Activated T-helper 1 cell treated with anti-CD3 and anti-CD28 coated beads, Interleukin-12 subunit alpha, Interleukin-12 subunit beta, Interleukin-2, Interleukin-4 antibody, amounts not matched to agents 30 ng/mL and 10 ng/mL and 1 ng/mL, durations not matched to agents 14 hours and 24 hours and 36 hours (primary cell): ENCODE measurements at regions of chr16 and their contacts with region 1.

Region 1: DNA sequence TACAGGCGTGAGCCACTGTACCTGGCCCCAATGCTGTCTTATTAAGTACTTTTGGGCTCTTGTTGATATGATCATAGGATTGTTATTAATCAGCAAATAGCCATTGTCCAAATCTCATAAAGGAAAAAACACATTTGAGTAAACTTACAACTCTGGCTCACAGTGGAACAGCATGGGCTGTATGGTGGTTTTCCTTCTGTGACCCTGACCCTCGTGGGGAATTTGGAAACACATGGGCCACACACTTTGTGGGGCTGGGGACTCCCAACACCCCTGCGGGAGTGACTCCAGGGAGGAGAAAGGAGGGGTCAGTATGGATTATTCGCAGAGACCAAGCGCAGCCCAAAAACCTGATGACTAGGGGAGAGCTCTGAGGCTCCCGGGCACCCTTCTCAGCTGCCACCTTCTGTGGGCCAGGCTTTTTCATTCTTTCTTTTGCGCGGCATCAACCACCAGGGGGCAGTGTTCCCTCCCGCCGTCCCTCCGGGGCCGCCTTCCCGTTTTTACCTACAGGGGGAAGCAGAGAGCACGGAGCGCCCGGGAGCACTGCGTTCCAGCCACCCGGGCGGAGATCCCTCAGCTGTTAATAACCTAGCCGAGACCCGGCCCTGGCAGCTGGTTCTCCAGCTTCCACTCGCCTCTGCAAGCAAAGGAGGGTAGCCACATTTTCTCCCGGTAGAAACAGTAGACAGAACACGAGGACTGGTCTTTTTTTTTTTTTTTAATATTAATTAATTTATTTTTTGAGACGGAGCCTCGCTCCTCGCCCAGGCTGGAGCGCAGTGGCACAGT is 9.7 kb downstream of the TSNAXIP1 start:
- DNase-seq: peak; percentile 88
- H3K4me3 Mint-ChIP-seq: no peak overlapping the region
- H3K27ac Mint-ChIP-seq: no peak overlapping the region
- H3K4me1 Mint-ChIP-seq: peaks cover 8% of the 10 kb centered on the region
- H3K27me3 Mint-ChIP-seq: peaks cover 10% of the 10 kb centered on the region

Region 2: GRCh38 chr16:67865316-67865715 is 48.9 kb after region 1 on chr16:
- intact Hi-C with region 1: loop called (anchors 2 kb)
- DNase-seq: no peak
- H3K4me3 Mint-ChIP-seq: no peak overlapping the region
- H3K27ac Mint-ChIP-seq: peak overlapping the region; percentile 73
- H3K4me1 Mint-ChIP-seq: peaks cover 15% of the 10 kb centered on the region
- H3K27me3 Mint-ChIP-seq: no peaks in the 10 kb centered on the region

Region 3: GRCh38 chr16:67917852-67918236 is 101.4 kb after region 1 on chr16:
- intact Hi-C with region 1: loop called (anchors 1 kb)
- DNase-seq: no peak
- H3K4me3 Mint-ChIP-seq: no peak overlapping the region
- H3K27ac Mint-ChIP-seq: peak overlapping the region; percentile 73
- H3K4me1 Mint-ChIP-seq: peaks cover 27% of the 10 kb centered on the region
- H3K27me3 Mint-ChIP-seq: no peaks in the 10 kb centered on the region

Region 4: DNA sequence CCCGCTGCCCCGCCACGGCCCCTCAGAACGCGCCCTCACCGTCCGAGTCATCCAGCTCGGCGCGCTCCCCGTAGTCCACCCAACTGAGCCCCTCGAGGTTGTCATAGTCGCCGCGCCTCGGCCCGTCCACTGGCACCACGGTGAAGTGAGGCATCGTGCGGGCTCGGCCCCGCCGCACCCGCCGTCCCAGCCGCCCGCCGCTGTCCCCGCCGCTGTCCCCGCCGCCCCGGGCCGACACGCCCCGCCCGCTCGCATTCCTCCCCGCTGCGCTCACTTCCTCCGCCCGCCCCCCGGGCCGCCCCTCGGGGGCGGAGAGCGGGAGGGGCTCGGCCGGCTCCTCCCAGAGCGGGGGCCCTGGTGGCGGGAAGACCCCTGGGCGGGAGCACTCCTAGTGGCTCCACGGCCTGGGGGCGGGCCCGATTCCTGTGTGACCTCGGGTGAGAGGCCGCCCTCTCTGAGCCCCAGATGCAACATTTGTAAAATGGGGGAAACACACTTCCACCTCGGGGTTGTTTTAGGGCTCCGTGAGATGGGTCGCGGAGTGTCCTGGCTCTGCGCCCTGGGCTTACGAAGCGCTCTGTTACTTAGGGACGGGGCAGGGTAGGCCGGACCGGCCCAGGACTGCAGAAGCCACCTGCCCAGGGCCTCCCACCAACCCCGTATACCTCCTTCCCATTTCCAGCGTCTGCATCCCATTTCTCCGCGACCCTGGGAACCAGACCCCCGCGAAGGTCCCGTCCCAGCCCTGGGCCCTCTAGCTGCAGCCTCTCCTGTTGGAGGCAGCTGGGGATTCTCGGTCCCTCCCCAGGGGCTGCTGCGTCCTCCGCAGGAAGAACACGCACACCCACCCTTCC is 152.2 kb after region 1 on chr16 and contains the start of gene SLC12A4:
- intact Hi-C with region 1: loop called (anchors 1 kb)
- DNase-seq: peak; percentile 89
- H3K4me3 Mint-ChIP-seq: peak within 1 kb of the TSS; percentile 99
- H3K27ac Mint-ChIP-seq: peak within 1 kb of the TSS; percentile 96
- H3K4me1 Mint-ChIP-seq: peaks cover 40% of the 10 kb centered on the region
- H3K27me3 Mint-ChIP-seq: no peaks in the 10 kb centered on the region
- total RNA-seq, gene SLC12A4: 40.0 and 43.1 TPM in 2 replicates

Region 5: GRCh38 chr16:68064791-68065365 is 248.4 kb after region 1 on chr16:
- intact Hi-C with region 1: loop called (anchors 5 kb)
- DNase-seq: peak; percentile 59
- H3K4me3 Mint-ChIP-seq: no peak overlapping the region
- H3K27ac Mint-ChIP-seq: peak overlapping the region; percentile 75
- H3K4me1 Mint-ChIP-seq: peaks cover 81% of the 10 kb centered on the region
- H3K27me3 Mint-ChIP-seq: no peaks in the 10 kb centered on the region